Dendritic cell treated with granulocyte-macrophage colony-stimulating factor and Interleukin-4, amounts not matched to agents 40 ng/mL and 50 ng/mL, for 4 days (primary cell): ENCODE measurements at regions of chr17 and their contacts with region 1.

Region 1: DNA sequence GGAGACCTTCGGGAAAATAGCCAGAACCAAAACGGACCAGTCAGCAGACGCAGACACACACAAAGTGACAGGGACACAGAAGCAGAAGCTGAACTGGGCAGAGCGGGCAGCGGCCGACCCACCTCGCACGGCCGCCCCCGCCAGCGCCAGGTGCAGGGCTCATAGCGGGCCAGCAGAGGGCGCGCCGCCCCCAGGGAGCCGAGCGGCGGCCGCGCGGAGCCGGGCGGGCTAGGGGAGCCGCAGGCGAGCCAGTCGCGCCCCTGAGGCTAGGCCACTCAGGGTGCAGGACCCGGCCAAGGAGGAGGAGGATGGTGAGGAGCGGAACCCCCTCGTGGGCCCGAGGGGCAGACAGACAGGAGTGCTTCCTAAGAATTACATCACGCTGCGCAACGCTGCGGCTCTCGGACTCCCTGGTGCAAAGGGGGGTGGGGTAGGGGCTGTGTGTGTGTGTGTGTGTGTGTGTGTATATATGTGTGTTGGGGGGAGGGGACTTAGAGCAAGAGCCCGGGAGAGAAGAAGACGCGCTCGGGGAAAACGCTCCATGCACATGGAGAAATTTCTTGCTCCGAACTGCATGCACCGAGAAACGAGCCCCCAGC is 913 bp upstream of the NOG start:
- H3K4me3 Mint-ChIP-seq: peak overlapping the region; percentile 75
- H3K27ac Mint-ChIP-seq: no peak overlapping the region
- H3K4me1 Mint-ChIP-seq: peaks cover 24% of the 10 kb centered on the region
- H3K27me3 Mint-ChIP-seq: peaks cover 67% of the 10 kb centered on the region

Region 2: DNA sequence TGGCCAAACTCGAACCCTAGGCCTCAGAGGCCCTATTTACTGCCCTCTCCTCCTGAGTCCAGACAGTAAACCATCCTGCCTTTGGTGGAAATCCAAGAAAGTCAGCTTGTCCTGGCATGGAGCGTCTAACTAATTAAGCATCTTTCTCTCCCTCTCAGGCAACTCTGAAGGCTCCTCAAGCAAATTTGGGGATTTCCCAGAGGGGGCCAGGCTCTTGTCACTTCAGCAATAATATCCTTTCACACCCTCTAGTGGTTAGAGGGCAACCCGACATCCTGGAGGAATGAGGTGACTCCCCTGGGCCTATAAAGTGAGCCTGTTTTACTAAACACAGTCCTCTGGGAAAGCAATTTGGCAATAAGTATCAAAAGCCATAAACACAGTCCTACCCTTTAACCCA is 61.3 kb after region 1 on chr17:
- intact Hi-C with region 1: loop called (anchors 2 kb)
- H3K4me3 Mint-ChIP-seq: no peak overlapping the region
- H3K27ac Mint-ChIP-seq: no peak overlapping the region
- H3K4me1 Mint-ChIP-seq: no peaks in the 10 kb centered on the region
- H3K27me3 Mint-ChIP-seq: peaks cover 4% of the 10 kb centered on the region

Region 3: DNA sequence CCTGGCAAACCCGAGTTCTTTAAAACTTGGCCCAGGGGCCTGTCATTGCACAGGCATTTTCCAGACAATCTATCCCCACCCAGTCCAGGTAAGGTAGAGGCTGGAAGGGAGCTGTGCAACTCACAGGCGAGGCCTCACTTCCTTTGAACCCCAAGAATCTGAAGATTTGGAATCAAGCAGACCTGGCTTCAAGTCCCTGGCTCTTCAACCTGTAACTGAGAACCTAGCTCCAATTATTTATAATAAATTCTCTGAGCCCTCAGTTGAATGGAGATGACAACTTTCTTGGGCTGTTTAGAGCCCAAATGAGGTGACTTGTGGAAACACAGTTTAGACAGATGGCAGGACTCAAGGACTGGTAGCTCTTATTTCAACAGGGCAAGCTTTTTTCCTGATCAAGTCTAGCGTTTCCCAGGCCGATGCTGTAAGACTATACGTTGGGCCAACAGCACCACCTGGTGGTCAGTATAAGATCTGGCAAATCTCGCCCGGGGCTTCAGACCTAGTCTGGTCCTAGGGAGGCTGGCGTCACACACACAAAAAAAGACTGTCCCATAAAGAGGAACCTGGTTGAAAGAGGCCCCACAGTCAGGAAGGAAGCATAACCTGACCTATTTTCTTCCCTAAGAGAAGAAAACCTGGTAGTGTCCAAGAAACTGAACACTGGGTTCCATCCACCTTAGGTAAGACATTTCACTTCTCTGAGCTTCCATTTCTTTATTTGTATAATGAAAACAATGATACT is 123.2 kb after region 1 on chr17:
- intact Hi-C with region 1: loop called (anchors 1 kb)
- H3K4me3 Mint-ChIP-seq: no peak overlapping the region
- H3K27ac Mint-ChIP-seq: no peak overlapping the region
- H3K4me1 Mint-ChIP-seq: no peaks in the 10 kb centered on the region
- H3K27me3 Mint-ChIP-seq: no peaks in the 10 kb centered on the region

Region 4: DNA sequence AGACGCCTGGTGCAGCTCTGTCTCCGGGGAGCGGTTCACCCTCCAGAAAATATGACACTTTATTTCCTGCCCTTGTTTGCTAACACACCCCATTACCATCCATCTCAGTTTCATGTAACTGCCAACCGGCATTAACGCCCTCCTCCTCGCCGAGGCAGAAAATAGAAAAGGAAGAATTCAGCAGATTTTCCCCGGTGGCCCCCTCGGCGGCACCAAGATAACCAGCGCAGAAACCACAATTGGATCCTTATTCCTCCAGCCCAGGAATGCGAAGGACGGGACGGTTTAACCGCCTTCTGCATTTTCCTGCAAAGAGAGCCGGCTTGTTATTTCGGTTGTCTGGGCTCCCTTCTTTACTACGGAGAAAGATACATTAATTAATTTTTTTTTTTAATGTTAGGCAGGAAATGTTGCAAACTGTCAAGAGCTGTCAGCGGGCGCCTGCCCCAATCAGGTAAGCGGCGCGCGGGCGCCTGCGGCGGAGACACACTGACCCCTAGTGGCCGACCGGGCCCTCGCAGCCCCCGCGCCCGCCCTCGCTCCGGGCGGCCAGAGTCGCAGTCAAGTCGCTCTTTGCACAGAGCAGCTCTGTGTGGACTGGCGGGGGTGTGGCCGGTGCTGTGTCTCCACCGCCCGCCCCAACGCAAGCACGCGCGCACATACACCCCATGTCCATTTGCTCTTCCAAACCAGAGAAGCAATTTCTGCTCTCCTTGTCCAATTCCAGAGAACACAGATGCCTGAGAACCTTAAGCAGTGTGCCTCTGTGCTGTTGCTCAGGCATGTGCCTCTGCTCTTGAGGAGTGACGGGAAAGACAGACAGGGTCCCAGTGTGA is 187.5 kb after region 1 on chr17:
- intact Hi-C with region 1: loop called (anchors 1 kb)
- H3K4me3 Mint-ChIP-seq: peak overlapping the region; percentile 64
- H3K27ac Mint-ChIP-seq: no peak overlapping the region
- H3K4me1 Mint-ChIP-seq: peaks cover 31% of the 10 kb centered on the region
- H3K27me3 Mint-ChIP-seq: peaks cover 61% of the 10 kb centered on the region